ENCODE measurements at regions of chr7 and their contacts with region 1.

Region 1: GRCh38 chr7:142603870-142604448 is 145.3 kb upstream of the PRSS1 start:
- DNase-seq: peak; percentile 68 to 87 (median 83)
- H3K4me3 ChIP-seq: no peak overlapping the region
- H3K27ac ChIP-seq: no peak overlapping the region
- H3K4me1 ChIP-seq: peaks cover 0 to 29% (median 22%) of the 10 kb centered on the region in 4 experiments
- H3K27me3 ChIP-seq: no peaks in the 10 kb centered on the region

Region 2: GRCh38 chr7:142523821-142524460 is 80.0 kb before region 1 on chr7:
- CTCF ChIA-PET with region 1: interaction called, 11 read pairs
- POLR2A ChIA-PET with region 1: no interaction called
- DNase-seq: peak in 2 of 3 donors; percentile 28 to 32
- H3K4me3 ChIP-seq: no peak overlapping the region
- H3K27ac ChIP-seq: no peak overlapping the region
- H3K4me1 ChIP-seq: peaks cover 0 to 9% (median 5%) of the 10 kb centered on the region in 4 experiments
- H3K27me3 ChIP-seq: no peaks in the 10 kb centered on the region

Measured in common myeloid progenitor, CD34-positive (primary cell).